ENCODE measurements at regions of chr18 and their contacts with region 1.

Region 1: DNA sequence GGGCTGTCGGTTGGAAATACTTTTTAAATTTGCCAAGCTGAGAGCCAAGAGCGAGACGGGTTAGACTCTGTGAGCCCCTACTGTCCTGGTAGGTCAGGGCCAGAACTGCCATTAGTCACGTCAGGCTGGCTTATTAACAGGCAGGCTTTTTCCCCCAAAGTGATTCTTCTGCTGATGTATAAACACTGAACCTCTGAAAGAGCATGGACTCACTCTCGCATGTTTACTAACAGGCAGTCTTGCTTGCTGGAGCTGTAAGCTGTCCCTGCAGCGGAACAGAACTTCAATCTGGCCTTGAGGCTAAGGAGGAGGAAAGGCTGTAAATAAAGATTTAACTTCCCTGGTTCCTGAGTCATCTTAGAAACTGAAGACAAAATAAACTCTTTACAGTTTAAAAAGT is 288.4 kb downstream of the PIEZO2 start:
- DNase-seq: no peak
- H3K4me3 ChIP-seq: no peak overlapping the region
- H3K27ac ChIP-seq: peak overlapping the region in 1 of 4 donors; percentile 9
- H3K4me1 ChIP-seq: peaks cover 0 to 6% (median 0%) of the 10 kb centered on the region in 4 donors
- H3K27me3 ChIP-seq: no peaks in the 10 kb centered on the region
- CTCF ChIP-seq: no peak
- EP300 ChIP-seq: no peak
- POLR2A ChIP-seq: no peak

Region 2: GRCh38 chr18:11027862-11028261 is 166.9 kb after region 1 on chr18:
- in situ Hi-C with region 1: loop called in 2 of 4 experiments (anchors 10 to 25 kb)
- intact Hi-C with region 1: no loop called
- DNase-seq: no peak
- H3K4me3 ChIP-seq: no peak overlapping the region
- H3K27ac ChIP-seq: no peak overlapping the region
- H3K4me1 ChIP-seq: no peaks in the 10 kb centered on the region
- H3K27me3 ChIP-seq: no peaks in the 10 kb centered on the region
- CTCF ChIP-seq: no peak
- EP300 ChIP-seq: no peak
- POLR2A ChIP-seq: no peak

Region 3: DNA sequence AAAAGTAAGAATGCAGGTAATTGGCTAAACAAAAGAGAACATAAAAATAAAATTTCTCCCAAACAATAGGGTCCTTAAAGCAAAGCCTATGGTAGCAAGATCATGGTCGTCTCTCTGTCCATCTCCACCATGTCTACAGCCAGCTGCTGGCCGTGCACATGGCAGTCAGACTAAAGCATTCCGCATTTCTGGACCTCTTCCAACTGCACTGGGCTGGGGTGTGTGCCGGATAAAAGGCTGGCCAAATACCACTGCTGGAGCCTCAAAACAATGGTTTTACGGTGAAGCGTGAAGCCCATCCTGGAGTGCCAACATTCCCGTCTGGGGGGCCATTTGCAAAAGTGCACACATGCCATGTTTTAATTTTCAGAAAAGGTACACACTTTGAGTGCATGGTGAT is 363.2 kb after region 1 on chr18:
- in situ Hi-C with region 1: no loop called
- intact Hi-C with region 1: no loop called
- DNase-seq: no peak
- H3K4me3 ChIP-seq: no peak overlapping the region
- H3K27ac ChIP-seq: no peak overlapping the region
- H3K4me1 ChIP-seq: no peaks in the 10 kb centered on the region
- H3K27me3 ChIP-seq: no peaks in the 10 kb centered on the region
- CTCF ChIP-seq: no peak
- EP300 ChIP-seq: no peak
- POLR2A ChIP-seq: no peak

Region 4: GRCh38 chr18:11279461-11279860 is 418.5 kb after region 1 on chr18:
- in situ Hi-C with region 1: no loop called
- intact Hi-C with region 1: no loop called
- DNase-seq: no peak
- H3K4me3 ChIP-seq: no peak overlapping the region
- H3K27ac ChIP-seq: no peak overlapping the region
- H3K4me1 ChIP-seq: no peaks in the 10 kb centered on the region
- H3K27me3 ChIP-seq: no peaks in the 10 kb centered on the region
- CTCF ChIP-seq: no peak
- EP300 ChIP-seq: no peak
- POLR2A ChIP-seq: no peak

Measured in transverse colon (tissue), 4 donors.